Activated B cell treated with CpG ODN at 0.5 μM for 24 hours (primary cell): ENCODE measurements at regions of chr12 and their contacts with region 1.

Region 1: DNA sequence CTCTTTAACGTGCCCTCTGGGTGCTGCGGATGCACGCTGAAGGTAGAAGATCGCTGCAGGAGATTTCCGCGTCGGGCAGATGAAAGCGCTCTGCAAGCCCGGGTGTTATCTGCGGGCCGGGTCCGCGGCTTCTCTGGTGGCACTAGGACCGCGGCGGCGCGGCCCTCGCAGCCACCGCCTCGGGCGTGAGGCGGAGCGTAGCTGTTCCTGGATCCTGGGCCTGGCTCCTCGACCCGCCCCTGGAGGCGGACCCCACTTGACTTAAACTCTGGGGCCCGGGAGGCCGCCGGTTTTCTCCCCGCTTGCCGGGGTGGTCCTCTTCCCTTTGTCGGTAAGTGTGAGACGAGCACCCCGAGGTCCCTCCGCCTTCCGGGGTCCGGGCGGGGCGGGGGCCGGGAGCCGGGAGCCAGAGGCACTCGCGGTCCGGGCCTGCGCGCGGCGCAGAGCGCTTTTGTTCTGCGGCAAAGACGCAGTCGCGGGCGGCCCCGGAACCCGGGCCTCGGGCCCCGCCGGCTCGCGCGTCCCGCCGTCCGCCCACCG is at the start of gene RESF1:
- DNase-seq: peak; percentile 82
- ATAC-seq: peak; percentile 87
- H3K4me3 Mint-ChIP-seq: peak within 1 kb of the TSS; percentile 99
- H3K27ac Mint-ChIP-seq: peak within 1 kb of the TSS; percentile 99
- H3K4me1 Mint-ChIP-seq: peaks cover 76% of the 10 kb centered on the region
- H3K27me3 Mint-ChIP-seq: no peaks in the 10 kb centered on the region
- CTCF ChIP-seq: no peak
- total RNA-seq, gene RESF1: 286 and 299 TPM in 2 replicates

Region 2: GRCh38 chr12:31325877-31326631 is 633.2 kb before region 1 on chr12 and contains the start of gene SINHCAF:
- CTCF ChIA-PET with region 1: no interaction called
- POLR2A ChIA-PET with region 1: no interaction called
- intact Hi-C with region 1: loop called (anchors 10 kb)
- DNase-seq: peak; percentile 99
- ATAC-seq: peak; percentile 62
- H3K4me3 Mint-ChIP-seq: peak within 1 kb of the TSS; percentile 96
- H3K27ac Mint-ChIP-seq: peak within 1 kb of the TSS; percentile 97
- H3K4me1 Mint-ChIP-seq: peaks cover 34% of the 10 kb centered on the region
- H3K27me3 Mint-ChIP-seq: no peaks in the 10 kb centered on the region
- CTCF ChIP-seq: no peak
- total RNA-seq, gene SINHCAF: 153 and 157 TPM in 2 replicates

Region 3: GRCh38 chr12:31682136-31682962 is 276.9 kb before region 1 on chr12:
- CTCF ChIA-PET with region 1: interaction called, 3 read pairs
- POLR2A ChIA-PET with region 1: interaction called, 40 read pairs
- intact Hi-C with region 1: loop called (anchors 1 kb)
- DNase-seq: peak; percentile 37
- ATAC-seq: peak; percentile 79
- H3K4me3 Mint-ChIP-seq: peak overlapping the region; percentile 64
- H3K27ac Mint-ChIP-seq: peak overlapping the region; percentile 91
- H3K4me1 Mint-ChIP-seq: peaks cover 38% of the 10 kb centered on the region
- H3K27me3 Mint-ChIP-seq: no peaks in the 10 kb centered on the region
- CTCF ChIP-seq: peak; percentile 13

Region 4: GRCh38 chr12:31749024-31749704 is 210.1 kb before region 1 on chr12:
- CTCF ChIA-PET with region 1: interaction called, 3 read pairs
- POLR2A ChIA-PET with region 1: interaction called, 32 read pairs
- intact Hi-C with region 1: loop called (anchors 1 kb)
- DNase-seq: no peak
- ATAC-seq: peak; percentile 74
- H3K4me3 Mint-ChIP-seq: peak overlapping the region; percentile 68
- H3K27ac Mint-ChIP-seq: peak overlapping the region; percentile 97
- H3K4me1 Mint-ChIP-seq: peaks cover 78% of the 10 kb centered on the region
- H3K27me3 Mint-ChIP-seq: no peaks in the 10 kb centered on the region
- CTCF ChIP-seq: no peak

Region 5: GRCh38 chr12:31859232-31859977 is 99.8 kb before region 1 on chr12:
- CTCF ChIA-PET with region 1: no interaction called
- POLR2A ChIA-PET with region 1: interaction called, 7 read pairs
- intact Hi-C with region 1: loop called (anchors 1 kb)
- DNase-seq: peak; percentile 35
- ATAC-seq: peak; percentile 93
- H3K4me3 Mint-ChIP-seq: peak overlapping the region; percentile 61
- H3K27ac Mint-ChIP-seq: peak overlapping the region; percentile 87
- H3K4me1 Mint-ChIP-seq: peaks cover 31% of the 10 kb centered on the region
- H3K27me3 Mint-ChIP-seq: no peaks in the 10 kb centered on the region
- CTCF ChIP-seq: no peak

Region 6: DNA sequence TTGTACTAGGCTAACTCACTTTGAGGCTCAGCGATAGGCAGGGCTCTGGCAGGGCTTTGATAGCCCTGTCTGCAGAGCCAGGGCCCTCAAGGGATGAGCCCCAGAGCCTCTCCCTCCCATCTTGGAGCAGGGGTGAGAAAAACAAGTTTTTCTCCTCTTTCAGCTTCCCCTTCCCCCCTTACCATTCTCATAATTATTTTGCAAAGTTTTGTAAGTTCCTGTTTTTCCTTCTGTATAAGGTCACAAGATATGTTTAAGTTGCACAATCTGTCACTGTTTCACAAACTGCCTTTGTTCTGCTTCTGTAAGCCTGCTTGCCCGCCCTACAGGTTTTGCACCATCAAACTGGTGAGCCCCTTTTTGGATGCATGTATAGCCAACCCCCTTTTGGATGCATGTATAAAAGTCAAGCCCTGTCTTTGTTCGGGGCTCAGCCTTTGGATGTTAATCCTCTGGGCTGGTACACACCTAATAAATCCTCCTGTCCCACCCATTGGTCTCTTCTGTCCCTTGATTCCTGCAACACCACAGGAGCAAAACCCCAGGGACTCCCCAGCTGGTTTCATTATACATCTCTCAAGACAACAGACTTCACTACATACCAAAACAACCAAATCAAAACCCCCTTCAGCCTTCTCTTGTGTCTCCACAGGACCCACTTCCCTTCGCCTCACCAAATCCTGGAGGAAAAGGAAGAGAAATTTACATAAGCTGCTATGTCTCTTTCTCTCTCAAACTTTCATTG is 52.5 kb before region 1 on chr12:
- CTCF ChIA-PET with region 1: no interaction called
- POLR2A ChIA-PET with region 1: interaction called, 33 read pairs
- intact Hi-C with region 1: no loop called
- DNase-seq: no peak
- ATAC-seq: peak; percentile 80
- H3K4me3 Mint-ChIP-seq: peak overlapping the region; percentile 55
- H3K27ac Mint-ChIP-seq: peak overlapping the region; percentile 87
- H3K4me1 Mint-ChIP-seq: peaks cover 33% of the 10 kb centered on the region
- H3K27me3 Mint-ChIP-seq: no peaks in the 10 kb centered on the region
- CTCF ChIP-seq: no peak

Region 7: DNA sequence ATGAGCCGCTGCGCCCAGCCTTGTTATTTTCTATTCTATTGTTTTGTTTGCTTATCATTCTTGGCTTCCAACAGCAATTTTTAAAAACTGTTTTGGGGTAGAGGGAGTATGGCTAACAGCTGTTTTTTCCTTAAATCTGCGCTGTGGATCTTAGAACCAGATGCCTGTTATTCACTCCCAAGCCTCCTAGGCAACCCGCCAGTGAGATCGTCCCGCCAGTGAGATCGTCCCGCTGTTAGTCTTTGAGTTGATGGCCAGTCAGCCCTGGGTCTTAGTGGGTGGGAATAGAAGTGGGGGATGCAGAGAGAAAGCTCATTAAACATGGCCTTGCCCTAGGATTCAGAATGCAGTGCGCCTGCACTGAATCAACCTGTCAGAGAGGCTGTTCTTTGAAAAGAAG is 80.1 kb after region 1 on chr12:
- CTCF ChIA-PET with region 1: no interaction called
- POLR2A ChIA-PET with region 1: no interaction called
- intact Hi-C with region 1: no loop called
- DNase-seq: no peak
- ATAC-seq: no peak
- H3K4me3 Mint-ChIP-seq: no peak overlapping the region
- H3K27ac Mint-ChIP-seq: no peak overlapping the region
- H3K4me1 Mint-ChIP-seq: no peaks in the 10 kb centered on the region
- H3K27me3 Mint-ChIP-seq: no peaks in the 10 kb centered on the region
- CTCF ChIP-seq: no peak

Region 8: GRCh38 chr12:32302218-32303173 is 343.3 kb after region 1 on chr12:
- CTCF ChIA-PET with region 1: no interaction called
- POLR2A ChIA-PET with region 1: no interaction called
- intact Hi-C with region 1: loop called (anchors 2 kb)
- DNase-seq: peak; percentile 21
- ATAC-seq: peak; percentile 99
- H3K4me3 Mint-ChIP-seq: peak overlapping the region; percentile 74
- H3K27ac Mint-ChIP-seq: peak overlapping the region; percentile 78
- H3K4me1 Mint-ChIP-seq: peaks cover 31% of the 10 kb centered on the region
- H3K27me3 Mint-ChIP-seq: no peaks in the 10 kb centered on the region
- CTCF ChIP-seq: no peak